ENCODE measurements at regions of chr12 and their contacts with region 1.

Region 1: DNA sequence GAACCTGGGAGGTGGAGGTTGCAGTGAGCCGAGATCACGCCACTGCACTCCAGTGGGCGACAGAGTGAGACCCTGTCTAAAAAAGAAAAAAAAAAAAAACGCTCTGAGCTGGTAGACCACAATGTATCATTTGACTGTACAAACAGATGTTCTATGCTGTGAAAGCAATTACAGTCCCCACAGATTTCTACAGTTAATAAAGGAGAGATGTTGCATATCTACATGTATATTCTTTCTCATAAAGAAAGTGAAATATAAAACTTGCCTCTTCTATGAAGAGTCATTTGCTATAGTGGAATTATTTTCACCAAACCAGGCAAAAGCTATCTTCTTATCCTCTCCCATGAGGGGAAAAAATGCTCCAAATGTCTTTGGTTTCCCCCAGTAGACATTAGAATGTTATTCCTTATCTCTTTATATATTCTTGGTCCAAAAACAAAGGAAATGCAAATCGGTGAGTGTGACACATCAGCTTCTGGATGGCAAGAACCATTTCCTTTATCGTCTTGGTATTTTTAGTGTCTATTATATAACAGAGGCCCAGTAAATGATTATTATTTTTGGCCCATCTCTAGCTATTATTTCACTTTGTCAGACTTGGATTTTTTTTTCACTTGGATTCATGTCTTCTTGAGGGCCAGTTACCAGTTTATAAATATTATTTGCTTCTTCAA is 230.4 kb downstream of the SSPN start:
- DNase-seq: no peak
- ATAC-seq: no peak
- H3K4me3 Mint-ChIP-seq: no peak overlapping the region
- H3K27ac Mint-ChIP-seq: no peak overlapping the region
- H3K4me1 Mint-ChIP-seq: peaks cover 2% of the 10 kb centered on the region
- H3K27me3 Mint-ChIP-seq: no peaks in the 10 kb centered on the region

Region 2: DNA sequence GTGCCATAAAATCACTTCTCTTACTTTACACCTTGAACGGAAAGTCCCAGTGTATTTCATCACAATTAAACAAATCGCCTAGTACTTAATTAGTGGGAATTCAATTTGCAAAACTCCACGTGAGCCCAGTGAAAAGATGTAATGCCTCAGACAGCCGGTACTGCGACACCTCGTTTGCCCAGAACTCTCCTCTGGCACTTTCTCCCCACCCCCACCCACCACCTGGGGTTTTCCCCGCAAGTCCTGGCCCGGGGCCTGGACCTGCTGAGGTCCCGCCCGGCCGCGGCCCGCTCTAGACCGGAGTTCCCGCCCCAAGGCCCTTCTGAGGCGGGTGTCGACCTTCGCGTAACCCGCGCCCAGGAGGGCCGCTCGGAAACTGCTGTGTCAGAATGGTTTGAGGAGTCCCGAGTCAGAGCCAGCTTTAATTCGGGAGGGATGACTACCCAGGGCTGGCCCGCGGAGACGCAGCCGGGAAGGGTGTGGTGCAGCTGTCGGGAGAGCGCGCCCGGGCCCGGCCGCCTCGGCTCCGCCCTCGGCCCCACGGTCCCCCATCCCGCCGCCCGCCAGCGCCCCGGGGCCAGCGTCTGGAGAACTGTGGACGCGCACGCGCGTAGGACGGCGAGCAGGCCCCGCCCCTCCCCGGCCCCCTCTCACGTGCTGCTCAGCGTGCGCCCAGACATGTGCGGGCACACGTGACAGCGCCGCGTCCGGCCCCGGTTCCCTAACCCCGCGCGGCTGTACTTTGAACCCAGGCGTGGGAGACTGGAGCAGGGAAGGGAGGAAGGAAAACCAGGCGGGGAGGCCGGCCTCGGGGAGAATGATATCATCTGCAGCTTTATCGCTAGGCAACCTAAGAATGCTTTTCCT is 311.6 kb before region 1 on chr12:
- CTCF ChIA-PET with region 1: no interaction called
- POLR2A ChIA-PET with region 1: no interaction called
- intact Hi-C with region 1: loop called in 1 of 2 experiments (anchors 10 kb)
- DNase-seq: peak; percentile 87
- ATAC-seq: peak; percentile 88
- H3K4me3 Mint-ChIP-seq: peak overlapping the region; percentile 69
- H3K27ac Mint-ChIP-seq: peak overlapping the region; percentile 25
- H3K4me1 Mint-ChIP-seq: peaks cover 11% of the 10 kb centered on the region
- H3K27me3 Mint-ChIP-seq: peaks cover 37% of the 10 kb centered on the region

Region 3: DNA sequence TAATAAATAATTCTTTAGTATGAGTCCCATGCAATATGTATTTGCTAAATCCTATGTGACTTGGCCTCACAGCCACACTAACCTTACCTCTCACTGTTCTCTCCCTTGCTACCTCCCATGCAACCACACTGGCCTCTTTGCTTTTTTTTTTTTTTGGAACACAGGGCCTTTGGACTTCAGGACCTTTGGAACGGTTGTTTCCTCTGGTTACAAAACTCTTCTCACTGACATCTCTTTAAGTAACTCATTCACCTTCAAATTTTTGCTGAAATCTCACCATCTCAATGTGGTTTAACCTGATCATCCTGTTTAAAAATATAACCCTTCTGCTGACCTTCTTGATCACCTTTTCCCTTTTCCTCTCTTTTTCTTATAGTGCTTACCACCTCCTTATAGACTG is 36.4 kb before region 1 on chr12:
- CTCF ChIA-PET with region 1: no interaction called
- POLR2A ChIA-PET with region 1: no interaction called
- intact Hi-C with region 1: no loop called
- DNase-seq: no peak
- ATAC-seq: no peak
- H3K4me3 Mint-ChIP-seq: no peak overlapping the region
- H3K27ac Mint-ChIP-seq: no peak overlapping the region
- H3K4me1 Mint-ChIP-seq: no peaks in the 10 kb centered on the region
- H3K27me3 Mint-ChIP-seq: no peaks in the 10 kb centered on the region

Measured in activated CD4-positive, alpha-beta T cell treated with anti-CD3 and anti-CD28 coated beads for 36 hours (primary cell).